ENCODE measurements at regions of chr5 and their contacts with region 1.

Region 1: DNA sequence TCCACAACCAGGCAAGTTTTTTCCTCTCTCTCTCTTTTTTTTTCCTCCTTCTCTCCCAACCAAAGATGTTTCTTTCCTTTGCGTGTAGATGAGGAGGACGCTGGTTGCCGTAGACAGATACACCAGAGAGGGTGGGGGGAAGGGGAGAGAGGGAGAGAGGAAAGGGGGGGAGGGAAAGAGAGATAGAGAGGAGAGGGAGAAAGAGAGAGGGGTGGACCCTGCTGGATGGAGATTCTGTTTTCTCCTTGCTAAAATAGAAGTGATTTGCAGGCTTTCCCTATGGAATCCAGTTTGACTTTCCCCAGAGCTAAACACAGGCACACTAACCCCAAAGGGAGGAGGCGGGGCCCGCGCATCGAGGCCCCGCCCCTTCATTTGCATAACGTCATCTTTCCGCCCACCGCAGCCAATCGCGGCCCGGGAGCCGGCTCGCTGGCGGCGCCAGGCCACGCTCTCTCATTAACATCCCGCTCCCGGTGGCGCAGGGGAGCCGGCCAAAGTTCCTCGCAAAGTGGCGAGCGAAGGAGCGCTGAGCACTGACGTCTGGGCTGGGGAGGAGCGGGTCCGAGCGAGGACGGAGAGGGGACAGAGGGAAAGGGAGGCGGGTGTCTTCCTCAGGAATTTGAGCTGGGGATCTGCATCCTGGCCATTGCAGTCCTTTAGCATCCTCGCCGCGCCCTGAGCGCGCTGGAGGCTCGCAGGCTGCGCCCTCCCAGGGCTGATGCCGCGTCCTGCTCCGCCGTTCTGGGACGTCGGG is 487 bp upstream of the EBF1 start:
- ATAC-seq: peak; percentile 83 to 91 (median 88)
- H3K4me3 ChIP-seq: peak overlapping the region; percentile 38 to 73 (median 49)
- H3K27ac ChIP-seq: peak overlapping the region in 1 of 2 donors; percentile 6
- H3K4me1 ChIP-seq: peaks cover 7 to 25% of the 10 kb centered on the region in 2 donors

Region 2: GRCh38 chr5:158701406-158702177 is 398.6 kb before region 1 on chr5:
- in situ Hi-C with region 1: loop called (anchors 5 to 25 kb)
- ATAC-seq: no peak
- H3K4me3 ChIP-seq: no peak overlapping the region
- H3K27ac ChIP-seq: no peak overlapping the region
- H3K4me1 ChIP-seq: peaks cover 6 to 12% of the 10 kb centered on the region in 2 donors